Esophagus squamous epithelium (tissue), 5 donors: ENCODE measurements at regions of chr2 and their contacts with region 1.

Region 1: DNA sequence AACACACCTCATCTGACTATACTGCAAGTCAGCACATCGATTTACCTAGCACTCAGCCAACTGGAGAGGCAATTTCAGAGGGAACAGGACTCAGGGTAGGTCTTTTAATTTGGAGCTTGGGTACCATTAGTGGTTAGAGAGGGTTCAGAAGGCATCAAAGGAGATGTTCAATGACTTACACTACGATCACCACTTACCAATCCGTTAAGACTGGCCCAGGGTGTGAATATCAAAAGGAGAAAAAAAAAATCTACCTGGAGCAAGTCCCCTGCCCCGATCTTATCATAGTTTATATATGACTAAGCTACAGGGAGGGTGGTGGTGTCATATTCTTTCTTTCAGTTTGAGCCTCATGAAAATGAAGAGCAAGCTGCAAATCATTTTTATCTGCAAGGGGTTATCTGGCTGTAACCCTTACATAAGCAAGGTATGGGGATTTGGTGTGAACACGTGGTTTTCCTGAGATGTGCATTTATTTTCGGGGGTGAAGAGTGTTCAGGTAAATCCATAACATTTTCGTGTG is 36.4 kb upstream of the GPD2 start:
- DNase-seq: no peak
- H3K4me3 ChIP-seq: peak overlapping the region; percentile 53 to 89 (median 81)
- H3K27ac ChIP-seq: peak overlapping the region; percentile 80 to 94 (median 92)
- H3K4me1 ChIP-seq: peaks cover 0 to 15% (median 6%) of the 10 kb centered on the region in 3 donors
- H3K27me3 ChIP-seq: no peaks in the 10 kb centered on the region
- CTCF ChIP-seq: no peak
- POLR2A ChIP-seq: no peak

Region 2: GRCh38 chr2:156349605-156350004 is 50.2 kb before region 1 on chr2:
- intact Hi-C with region 1: loop called (anchors 5 kb)
- DNase-seq: no peak
- H3K4me3 ChIP-seq: no peak overlapping the region
- H3K27ac ChIP-seq: no peak overlapping the region
- H3K4me1 ChIP-seq: no peaks in the 10 kb centered on the region
- H3K27me3 ChIP-seq: no peaks in the 10 kb centered on the region
- CTCF ChIP-seq: no peak
- POLR2A ChIP-seq: no peak